PC-9 (cell line): ENCODE measurements at regions of chr15 and their contacts with region 1.

Region 1: DNA sequence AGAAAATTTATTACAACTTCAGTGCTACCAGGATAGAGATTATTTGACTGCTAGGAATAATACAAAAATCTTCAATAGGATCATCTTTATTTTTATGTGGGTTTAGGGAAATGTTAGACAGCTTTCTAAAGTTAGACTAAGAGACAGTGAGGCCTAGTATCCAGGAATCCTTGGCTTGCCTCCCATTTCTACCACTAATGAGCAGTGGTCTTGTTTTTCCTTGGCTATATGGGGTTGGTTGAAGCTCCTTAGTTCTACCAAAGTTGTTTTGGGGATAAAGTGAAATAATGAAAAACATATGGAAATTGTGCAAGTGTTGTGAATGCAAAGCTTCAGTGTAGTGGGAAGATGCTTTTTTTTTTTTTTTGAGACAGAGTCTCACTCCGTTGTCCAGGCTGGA is 16.8 kb downstream of the AP4E1 start:
- DNase-seq: no peak
- H3K4me3 ChIP-seq: no peak overlapping the region
- H3K27ac ChIP-seq: no peak overlapping the region
- H3K4me1 ChIP-seq: no peaks in the 10 kb centered on the region
- H3K27me3 ChIP-seq: no peaks in the 10 kb centered on the region
- CTCF ChIP-seq: no peak

Region 2: GRCh38 chr15:50452927-50453326 is 472.4 kb before region 1 on chr15:
- CTCF ChIA-PET with region 1: no interaction called
- POLR2A ChIA-PET with region 1: interaction called, 14 read pairs
- intact Hi-C with region 1: no loop called
- DNase-seq: no peak
- H3K4me3 ChIP-seq: no peak overlapping the region
- H3K27ac ChIP-seq: no peak overlapping the region
- H3K4me1 ChIP-seq: no peaks in the 10 kb centered on the region
- H3K27me3 ChIP-seq: no peaks in the 10 kb centered on the region
- CTCF ChIP-seq: no peak